ENCODE measurements at regions of chr10 and their contacts with region 1.

Region 1: DNA sequence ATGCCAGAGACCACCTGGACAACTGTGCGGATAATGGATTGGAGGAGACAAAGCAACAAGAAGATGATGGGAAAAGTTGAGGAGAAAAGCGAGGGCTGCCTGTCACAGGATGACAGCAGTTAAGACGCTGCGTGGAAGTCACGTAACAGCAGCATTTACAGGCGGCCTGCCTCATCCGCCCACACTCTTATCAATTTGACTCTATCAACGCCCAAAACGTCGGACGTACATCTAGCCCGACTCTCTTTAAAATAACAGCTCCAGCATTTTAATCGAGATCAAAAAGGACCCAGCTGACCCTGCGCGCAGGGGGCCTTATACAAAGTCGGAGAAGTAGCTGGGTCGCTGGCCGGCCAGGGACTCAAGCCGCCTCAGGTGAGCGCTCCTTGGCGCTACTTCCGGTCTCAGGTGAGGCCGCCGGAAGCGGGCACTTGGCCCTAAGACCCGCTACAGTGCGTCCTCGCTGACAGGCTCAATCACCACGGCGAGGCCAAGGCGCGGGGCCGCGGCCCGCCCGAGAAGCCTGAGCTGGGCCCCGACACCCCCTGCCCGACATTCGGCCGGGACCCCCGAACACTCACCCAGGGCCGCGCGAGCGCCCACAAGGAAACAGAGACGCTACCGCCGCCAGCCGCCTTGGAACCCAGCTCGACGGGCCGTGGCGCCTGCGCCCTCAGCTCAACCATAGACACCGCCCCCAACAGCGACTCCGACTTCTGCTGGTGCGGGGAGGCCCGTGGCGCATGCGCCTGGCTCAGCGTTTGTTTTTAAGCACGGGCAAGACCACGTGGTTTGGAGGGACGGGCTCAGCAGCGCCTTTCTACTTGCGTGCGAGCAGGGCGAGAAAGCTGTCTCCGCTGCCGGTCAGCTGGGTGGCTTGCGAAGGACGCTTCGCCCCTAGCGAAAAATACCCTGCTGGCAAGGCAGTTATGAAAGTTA is at the start of gene ERCC6:
- DNase-seq: peak; percentile 98
- H3K4me3 Mint-ChIP-seq: peak within 1 kb of the TSS; percentile 91
- H3K27ac Mint-ChIP-seq: peak within 1 kb of the TSS; percentile 97
- H3K4me1 Mint-ChIP-seq: peaks cover 34% of the 10 kb centered on the region
- H3K27me3 Mint-ChIP-seq: peaks cover 12% of the 10 kb centered on the region
- total RNA-seq, gene ERCC6: 13.8 and 14.5 TPM in 2 replicates

Region 2: GRCh38 chr10:48306265-48306869 is 1232.3 kb before region 1 on chr10 and contains the start of gene MAPK8:
- intact Hi-C with region 1: loop called (anchors 2 kb)
- DNase-seq: peak; percentile 97
- H3K4me3 Mint-ChIP-seq: peak within 1 kb of the TSS; percentile 82
- H3K27ac Mint-ChIP-seq: peak within 1 kb of the TSS; percentile 83
- H3K4me1 Mint-ChIP-seq: peaks cover 24% of the 10 kb centered on the region
- H3K27me3 Mint-ChIP-seq: peaks cover 2% of the 10 kb centered on the region
- total RNA-seq, gene MAPK8: 46.2 and 46.4 TPM in 2 replicates